Activated T-helper 1 cell treated with anti-CD3 and anti-CD28 coated beads, Interleukin-12 subunit alpha, Interleukin-12 subunit beta, Interleukin-2, Interleukin-4 antibody, amounts not matched to agents 30 ng/mL and 10 ng/mL and 1 ng/mL, durations not matched to agents 14 hours and 24 hours and 36 hours (primary cell): ENCODE measurements at regions of chr6 and their contacts with region 1.

Region 1: DNA sequence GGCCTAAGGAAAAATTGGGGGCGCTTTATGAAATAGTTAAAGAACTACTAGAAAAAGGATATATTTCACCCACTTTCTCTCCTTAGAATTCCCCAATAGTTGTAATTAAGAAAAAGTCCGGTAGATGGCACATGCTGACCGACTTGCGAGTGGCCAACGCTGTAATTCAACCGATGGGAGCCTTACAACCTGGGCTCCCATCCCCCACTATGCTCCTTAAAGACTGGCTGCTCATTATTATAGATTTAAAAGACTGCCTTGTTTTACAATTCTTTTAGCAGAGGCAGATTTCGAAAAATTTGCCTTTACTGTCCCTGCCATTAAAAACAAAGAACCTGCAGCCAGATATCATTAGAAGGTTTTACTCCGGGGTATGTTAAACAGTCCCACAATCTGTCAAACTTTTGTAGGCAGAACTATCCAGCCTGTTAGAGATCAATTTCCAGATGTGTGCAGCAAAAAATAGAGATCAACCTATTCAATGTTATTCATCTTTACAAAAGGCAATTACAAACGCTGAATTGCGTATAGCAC is 58.5 kb upstream of the PRSS16 start:
- DNase-seq: peak; percentile 25
- H3K4me3 Mint-ChIP-seq: peak overlapping the region; percentile 93
- H3K27ac Mint-ChIP-seq: no peak overlapping the region
- H3K4me1 Mint-ChIP-seq: peaks cover 15% of the 10 kb centered on the region
- H3K27me3 Mint-ChIP-seq: peaks cover 4% of the 10 kb centered on the region

Region 2: DNA sequence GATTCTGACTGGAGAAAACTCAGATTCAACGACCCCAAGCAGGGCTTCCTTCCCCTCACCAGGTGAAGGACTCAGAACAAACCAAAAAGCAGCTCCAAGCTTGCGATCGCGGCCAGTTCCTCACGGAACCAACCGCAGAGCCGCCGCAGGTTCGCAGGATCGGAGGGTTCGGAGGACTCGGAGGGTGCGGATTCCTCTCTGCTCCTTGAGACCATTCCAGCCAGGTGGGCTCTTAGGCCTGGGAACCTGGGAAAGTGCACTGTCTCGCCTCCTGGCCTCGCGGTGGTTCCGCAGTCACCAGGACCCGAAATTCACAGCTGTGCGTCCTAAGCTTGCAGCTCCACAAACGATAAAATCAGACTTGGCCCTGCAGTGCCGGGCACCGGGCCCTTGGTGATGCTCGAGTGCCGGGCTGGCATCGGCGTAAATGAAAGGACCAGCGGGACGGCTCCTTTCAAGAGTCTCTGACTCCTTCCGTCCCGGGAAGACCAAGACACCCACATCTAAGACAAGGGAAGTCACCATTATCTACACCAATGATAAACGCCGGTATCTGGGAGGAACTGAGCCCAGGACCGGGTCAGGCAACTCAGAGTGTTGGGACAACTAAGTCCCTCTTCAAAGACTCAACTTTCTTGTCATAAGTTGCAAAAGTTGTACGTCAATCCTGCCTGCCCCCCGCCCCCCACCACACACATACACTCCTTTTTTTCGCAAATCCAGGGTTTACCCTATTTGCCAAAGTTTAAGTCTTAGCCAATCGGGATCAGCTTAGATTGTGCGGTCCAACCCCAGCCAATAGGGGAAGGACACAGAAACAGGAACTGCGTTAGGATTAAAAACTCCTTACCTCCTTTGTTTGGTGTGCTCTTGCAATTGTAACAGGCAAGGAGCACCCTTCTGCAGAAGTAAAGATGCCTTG is 11.2 kb before region 1 on chr6:
- intact Hi-C with region 1: loop called (anchors 1 kb)
- DNase-seq: peak; percentile 66
- H3K4me3 Mint-ChIP-seq: peak overlapping the region; percentile 95
- H3K27ac Mint-ChIP-seq: peak overlapping the region; percentile 93
- H3K4me1 Mint-ChIP-seq: peaks cover 7% of the 10 kb centered on the region
- H3K27me3 Mint-ChIP-seq: peaks cover 36% of the 10 kb centered on the region

Region 3: GRCh38 chr6:27205375-27206278 is 16.7 kb after region 1 on chr6:
- intact Hi-C with region 1: no loop called
- DNase-seq: no peak
- H3K4me3 Mint-ChIP-seq: peak overlapping the region; percentile 64
- H3K27ac Mint-ChIP-seq: no peak overlapping the region
- H3K4me1 Mint-ChIP-seq: peaks cover 17% of the 10 kb centered on the region
- H3K27me3 Mint-ChIP-seq: peaks cover 20% of the 10 kb centered on the region

Region 4: GRCh38 chr6:27374824-27375612 is 186.1 kb after region 1 on chr6:
- intact Hi-C with region 1: loop called (anchors 2 kb)
- DNase-seq: peak; percentile 43
- H3K4me3 Mint-ChIP-seq: peak overlapping the region; percentile 78
- H3K27ac Mint-ChIP-seq: no peak overlapping the region
- H3K4me1 Mint-ChIP-seq: peaks cover 20% of the 10 kb centered on the region
- H3K27me3 Mint-ChIP-seq: no peaks in the 10 kb centered on the region

Region 5: GRCh38 chr6:27608916-27609883 is 420.2 kb after region 1 on chr6:
- intact Hi-C with region 1: loop called (anchors 1 kb)
- DNase-seq: no peak
- H3K4me3 Mint-ChIP-seq: no peak overlapping the region
- H3K27ac Mint-ChIP-seq: no peak overlapping the region
- H3K4me1 Mint-ChIP-seq: peaks cover 18% of the 10 kb centered on the region
- H3K27me3 Mint-ChIP-seq: peaks cover 28% of the 10 kb centered on the region

Region 6: GRCh38 chr6:27847706-27848105 is 658.8 kb after region 1 on chr6:
- intact Hi-C with region 1: no loop called
- DNase-seq: no peak
- H3K4me3 Mint-ChIP-seq: no peak overlapping the region
- H3K27ac Mint-ChIP-seq: no peak overlapping the region
- H3K4me1 Mint-ChIP-seq: no peaks in the 10 kb centered on the region
- H3K27me3 Mint-ChIP-seq: peaks cover 26% of the 10 kb centered on the region

Region 7: GRCh38 chr6:28355743-28356665 is 1167.1 kb after region 1 on chr6:
- intact Hi-C with region 1: loop called (anchors 10 kb)
- DNase-seq: peak; percentile 48
- H3K4me3 Mint-ChIP-seq: peak overlapping the region; percentile 86
- H3K27ac Mint-ChIP-seq: peak overlapping the region; percentile 72
- H3K4me1 Mint-ChIP-seq: peaks cover 25% of the 10 kb centered on the region
- H3K27me3 Mint-ChIP-seq: no peaks in the 10 kb centered on the region